Panc1 (cell line): ENCODE measurements at regions of chr9 and their contacts with region 1.

Region 1: GRCh38 chr9:2872257-2872935 is 28.5 kb upstream of the PUM3 start:
- DNase-seq: no peak
- ATAC-seq: no peak
- H3K4me3 ChIP-seq: no peak overlapping the region
- H3K27ac ChIP-seq: no peak overlapping the region
- H3K4me1 ChIP-seq: no peaks in the 10 kb centered on the region
- H3K27me3 ChIP-seq: no peaks in the 10 kb centered on the region
- CTCF ChIP-seq: peak; percentile 30

Region 2: DNA sequence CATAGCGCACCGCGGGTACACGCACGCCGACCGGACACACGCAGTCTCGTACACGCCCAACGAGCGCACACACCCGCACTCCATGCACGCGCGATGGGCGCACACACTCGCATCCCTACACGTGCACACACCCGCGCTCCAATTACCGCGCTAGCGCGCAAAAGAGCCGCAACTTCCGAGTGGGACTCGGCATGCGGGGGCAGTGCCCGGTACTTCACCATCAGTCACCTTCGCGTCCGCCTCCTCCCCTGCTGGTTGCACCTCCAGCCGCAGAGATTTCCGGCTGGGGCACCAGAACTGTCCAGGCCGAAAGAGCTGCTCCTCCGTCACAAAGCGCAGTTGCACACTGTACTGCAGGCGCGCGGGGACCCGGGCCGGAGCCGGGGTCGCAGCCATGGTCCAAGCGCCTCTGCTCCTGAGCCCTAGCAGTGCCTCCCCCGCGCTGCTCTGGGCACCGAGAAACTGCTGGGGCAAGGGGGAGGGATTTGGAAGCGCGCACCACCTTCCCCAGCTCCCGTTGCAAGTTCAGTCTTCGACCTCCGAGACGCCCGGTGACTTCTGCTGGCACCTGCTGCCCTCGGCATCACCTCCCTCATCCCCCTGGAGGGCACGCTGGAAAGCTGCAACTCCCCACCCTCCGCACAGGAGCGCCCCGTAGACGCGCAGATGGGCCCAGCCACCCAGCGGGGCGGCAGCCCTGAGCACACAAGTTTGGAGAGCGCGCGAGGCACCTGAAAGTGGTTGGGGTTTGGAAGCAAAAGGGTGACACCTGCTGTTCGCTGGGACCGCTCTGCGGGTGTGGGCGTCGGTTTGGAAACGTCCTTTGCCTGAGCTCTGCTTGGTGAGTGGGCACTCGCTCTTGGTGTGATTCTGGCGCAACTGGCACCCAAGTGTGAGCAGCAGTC is 308.9 kb after region 1 on chr9:
- CTCF ChIA-PET with region 1: no interaction called
- POLR2A ChIA-PET with region 1: no interaction called
- in situ Hi-C with region 1: no loop called
- intact Hi-C with region 1: loop called (anchors 10 kb)
- DNase-seq: no peak
- ATAC-seq: no peak
- H3K4me3 ChIP-seq: no peak overlapping the region
- H3K27ac ChIP-seq: no peak overlapping the region
- H3K4me1 ChIP-seq: no peaks in the 10 kb centered on the region
- H3K27me3 ChIP-seq: no peaks in the 10 kb centered on the region
- CTCF ChIP-seq: peak; percentile 21; the same call in 1 of the 2 replicates